ENCODE measurements at regions of chr11 and their contacts with region 1.

Region 1: DNA sequence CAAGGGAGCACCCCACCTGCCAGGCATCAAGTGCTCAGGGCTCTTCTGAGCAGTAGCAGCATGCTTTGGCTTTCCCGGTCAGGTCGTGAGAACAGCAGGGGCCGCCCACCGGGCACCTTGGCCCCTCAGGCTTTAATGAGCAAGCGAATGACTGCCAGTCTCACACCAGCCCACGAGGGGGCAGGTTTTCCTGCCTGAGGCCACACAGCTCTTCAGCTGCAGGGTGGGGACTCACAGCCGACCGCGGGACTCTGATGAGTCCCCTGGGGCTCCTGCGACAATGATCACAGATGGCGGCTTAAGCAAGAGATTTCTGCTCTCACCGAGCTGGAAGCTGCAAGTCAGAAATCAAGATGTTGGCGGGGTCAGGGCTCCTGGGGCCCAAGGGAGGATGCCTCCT is 14.3 kb upstream of the FGF19 start:
- DNase-seq: peak; percentile 77 to 84
- H3K4me3 ChIP-seq: peak overlapping the region in 1 of 4 experiments; percentile 14; a peak in 1 of 8 replicates
- H3K27ac ChIP-seq: no peak overlapping the region
- H3K4me1 ChIP-seq: peaks cover 0 to 10% (median 2%) of the 10 kb centered on the region in 4 experiments; a peak in 5 of 7 replicates
- H3K27me3 ChIP-seq: peaks cover 0 to 19% (median 13%) of the 10 kb centered on the region in 4 experiments; a peak in 5 of 7 replicates
- CTCF ChIP-seq: peak; percentile 87 to 92 (median 91)
- EP300 ChIP-seq: no peak
- POLR2A ChIP-seq: no peak
- RAD21 ChIP-seq: peak; percentile 85 to 92

Region 2: GRCh38 chr11:69511358-69512055 is 206.6 kb before region 1 on chr11:
- CTCF ChIA-PET with region 1: no interaction called
- POLR2A ChIA-PET with region 1: no interaction called
- DNase-seq: no peak
- H3K4me3 ChIP-seq: no peak overlapping the region
- H3K27ac ChIP-seq: no peak overlapping the region
- H3K4me1 ChIP-seq: peaks cover 0 to 4% (median 0%) of the 10 kb centered on the region in 4 experiments; a peak in 2 of 7 replicates
- H3K27me3 ChIP-seq: no peaks in the 10 kb centered on the region; a peak in 1 of 7 replicates
- CTCF ChIP-seq: no peak
- EP300 ChIP-seq: no peak
- POLR2A ChIP-seq: no peak
- RAD21 ChIP-seq: no peak

Region 3: DNA sequence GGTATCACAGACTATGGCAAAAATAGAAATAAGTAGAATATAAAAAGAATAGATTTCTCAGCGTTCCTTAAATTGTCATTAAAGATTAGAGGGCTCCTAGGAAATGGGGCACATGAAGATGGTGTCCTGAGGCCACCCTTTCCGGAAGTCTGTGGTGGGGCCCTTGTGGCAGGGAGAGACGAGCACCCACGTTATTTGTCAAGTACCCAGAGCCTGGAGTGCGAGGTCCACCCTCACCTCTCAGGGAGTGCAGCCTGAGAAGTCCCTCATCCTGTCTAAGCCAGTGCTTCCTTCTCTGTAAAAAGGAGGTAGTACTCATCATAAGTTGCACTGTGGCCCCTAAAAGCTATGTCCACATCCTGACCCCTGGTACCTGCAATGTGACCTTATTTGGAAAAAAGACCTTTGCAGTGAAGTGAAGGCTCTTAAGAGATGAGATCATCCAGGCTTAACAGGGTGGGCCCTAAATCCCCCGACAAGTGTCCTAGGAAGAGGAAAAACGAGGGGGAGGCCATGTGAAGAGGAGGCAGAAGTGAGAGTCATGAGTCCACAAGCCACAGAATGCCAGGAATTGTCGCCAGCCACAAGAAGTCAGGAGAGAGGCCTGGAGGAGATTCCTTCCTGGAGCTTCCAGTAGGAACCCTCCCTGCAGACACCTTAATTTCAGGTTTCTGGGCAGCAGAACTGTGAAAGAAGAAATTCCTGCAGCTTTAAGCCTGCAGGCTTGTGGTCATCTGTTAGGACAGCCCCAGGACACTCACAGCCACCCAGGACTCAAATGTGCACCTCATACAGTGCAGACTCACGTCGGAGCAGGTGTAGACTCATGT is 154.0 kb before region 1 on chr11:
- CTCF ChIA-PET with region 1: no interaction called
- POLR2A ChIA-PET with region 1: no interaction called
- DNase-seq: no peak
- H3K4me3 ChIP-seq: no peak overlapping the region
- H3K27ac ChIP-seq: no peak overlapping the region
- H3K4me1 ChIP-seq: 0 out of 7 replicates have a peak, but pooled peaks cover 0 to 1% (median 0%) of the 10 kb centered on the region in 4 experiments
- H3K27me3 ChIP-seq: no peaks in the 10 kb centered on the region
- CTCF ChIP-seq: no peak
- EP300 ChIP-seq: no peak
- POLR2A ChIP-seq: no peak
- RAD21 ChIP-seq: no peak

Region 4: DNA sequence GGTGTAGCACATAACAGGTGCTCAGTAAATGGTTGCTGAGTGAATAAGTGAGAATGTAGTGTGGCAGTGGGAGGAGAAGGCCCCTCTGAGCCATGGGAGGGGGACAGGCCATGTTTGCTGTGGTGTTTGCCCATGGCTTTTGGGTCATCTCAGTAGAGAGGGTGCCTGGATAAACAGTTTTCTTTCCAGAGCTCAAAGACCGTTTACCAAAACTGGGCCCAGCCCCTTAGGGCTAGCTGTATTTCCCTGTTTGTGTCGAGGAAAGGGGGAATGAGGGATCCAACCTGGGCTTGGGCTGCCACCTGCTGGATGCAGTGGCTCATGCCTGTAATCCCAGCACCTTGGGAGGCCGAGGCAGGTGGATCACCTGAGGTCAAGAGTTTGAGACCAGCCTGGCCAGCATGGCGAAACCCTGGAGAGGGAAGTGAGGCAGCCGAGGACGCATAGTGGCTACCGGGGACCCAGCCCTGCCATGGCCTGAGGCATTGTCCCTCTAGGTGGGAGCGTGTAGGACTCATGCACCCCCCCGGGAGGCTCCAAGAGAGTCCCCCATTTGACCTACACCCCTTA is 34.3 kb before region 1 on chr11:
- CTCF ChIA-PET with region 1: interaction called, 29 read pairs
- POLR2A ChIA-PET with region 1: no interaction called
- DNase-seq: peak in 1 of 2 experiments; percentile 80
- H3K4me3 ChIP-seq: no peak overlapping the region
- H3K27ac ChIP-seq: no peak overlapping the region
- H3K4me1 ChIP-seq: no peaks in the 10 kb centered on the region; a peak in 1 of 7 replicates
- H3K27me3 ChIP-seq: peaks cover 0 to 6% (median 3%) of the 10 kb centered on the region in 4 experiments; a peak in 4 of 7 replicates
- CTCF ChIP-seq: peak; percentile 65 to 74 (median 67)
- EP300 ChIP-seq: no peak
- POLR2A ChIP-seq: no peak
- RAD21 ChIP-seq: peak; percentile 70 to 79

Region 5: DNA sequence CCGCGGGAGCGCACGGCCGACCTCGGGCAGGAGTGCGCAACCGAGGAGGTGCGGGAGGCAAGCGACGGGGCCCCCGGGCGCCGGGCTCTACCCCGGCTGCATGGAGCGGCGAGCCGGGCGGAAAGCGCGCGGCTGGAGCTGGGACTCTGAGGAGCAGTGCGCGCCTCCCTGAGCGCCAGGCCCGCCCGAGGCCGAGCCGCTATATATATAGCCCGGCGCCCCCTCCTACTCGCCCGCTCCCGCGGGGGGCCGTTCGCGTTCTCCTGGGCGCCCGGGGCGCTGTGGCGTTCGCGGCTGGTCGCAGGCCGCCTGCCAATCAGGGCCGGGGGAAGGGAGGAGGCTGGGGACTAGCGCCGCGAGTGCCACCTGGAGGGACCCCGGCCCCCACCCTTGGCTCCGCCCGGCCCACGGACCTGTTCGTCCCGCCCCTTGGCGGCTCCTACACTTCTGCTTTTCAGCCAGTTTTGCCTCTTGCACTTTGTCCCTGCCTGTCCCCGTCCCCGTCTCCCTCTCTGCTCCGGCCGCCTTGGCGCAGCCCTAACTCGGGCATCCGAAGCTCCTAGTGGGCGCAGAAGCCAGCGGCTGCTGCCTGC is 57.1 kb after region 1 on chr11 and contains the start of gene FGF4:
- CTCF ChIA-PET with region 1: interaction called, 12 read pairs
- POLR2A ChIA-PET with region 1: no interaction called
- DNase-seq: peak; percentile 21 to 83
- H3K4me3 ChIP-seq: peak within 1 kb of the TSS; percentile 23 to 60 (median 36)
- H3K27ac ChIP-seq: no peak within 1 kb of the TSS
- H3K4me1 ChIP-seq: peaks cover 11 to 36% (median 28%) of the 10 kb centered on the region in 4 experiments
- H3K27me3 ChIP-seq: peaks cover 20 to 50% (median 46%) of the 10 kb centered on the region in 4 experiments
- CTCF ChIP-seq: no peak
- EP300 ChIP-seq: no peak
- POLR2A ChIP-seq: no peak
- RAD21 ChIP-seq: no peak
- total RNA-seq, gene FGF4: 2.0 TPM in 2 replicates

Region 6: DNA sequence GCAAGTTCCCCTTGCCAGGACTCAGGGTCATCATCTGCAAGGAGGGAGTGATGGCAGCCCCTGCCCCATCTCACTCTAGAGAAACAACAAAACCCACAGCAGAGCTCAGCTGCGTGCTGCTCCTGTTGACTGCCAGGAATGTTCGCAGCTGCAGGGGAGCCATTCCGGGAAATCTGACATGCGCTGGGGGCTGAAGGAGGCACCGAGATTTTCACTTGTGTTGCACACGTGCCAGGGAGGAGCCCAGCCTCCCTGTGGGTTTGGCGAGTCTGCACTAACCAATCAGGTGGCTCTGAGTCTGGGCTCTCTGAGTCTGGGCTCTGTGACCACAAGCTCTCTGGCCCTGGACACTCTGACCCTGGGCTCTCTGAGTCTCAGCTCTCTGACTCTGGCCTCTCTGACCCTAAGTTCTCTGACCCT is 90.5 kb after region 1 on chr11:
- CTCF ChIA-PET with region 1: interaction called, 15 read pairs
- POLR2A ChIA-PET with region 1: no interaction called
- DNase-seq: no peak
- H3K4me3 ChIP-seq: no peak overlapping the region
- H3K27ac ChIP-seq: no peak overlapping the region
- H3K4me1 ChIP-seq: peaks cover 0 to 6% (median 1%) of the 10 kb centered on the region in 4 experiments; a peak in 4 of 7 replicates
- H3K27me3 ChIP-seq: peaks cover 0 to 4% (median 1%) of the 10 kb centered on the region in 4 experiments; a peak in 3 of 7 replicates
- CTCF ChIP-seq: no peak
- EP300 ChIP-seq: no peak
- POLR2A ChIP-seq: no peak
- RAD21 ChIP-seq: no peak

Region 7: DNA sequence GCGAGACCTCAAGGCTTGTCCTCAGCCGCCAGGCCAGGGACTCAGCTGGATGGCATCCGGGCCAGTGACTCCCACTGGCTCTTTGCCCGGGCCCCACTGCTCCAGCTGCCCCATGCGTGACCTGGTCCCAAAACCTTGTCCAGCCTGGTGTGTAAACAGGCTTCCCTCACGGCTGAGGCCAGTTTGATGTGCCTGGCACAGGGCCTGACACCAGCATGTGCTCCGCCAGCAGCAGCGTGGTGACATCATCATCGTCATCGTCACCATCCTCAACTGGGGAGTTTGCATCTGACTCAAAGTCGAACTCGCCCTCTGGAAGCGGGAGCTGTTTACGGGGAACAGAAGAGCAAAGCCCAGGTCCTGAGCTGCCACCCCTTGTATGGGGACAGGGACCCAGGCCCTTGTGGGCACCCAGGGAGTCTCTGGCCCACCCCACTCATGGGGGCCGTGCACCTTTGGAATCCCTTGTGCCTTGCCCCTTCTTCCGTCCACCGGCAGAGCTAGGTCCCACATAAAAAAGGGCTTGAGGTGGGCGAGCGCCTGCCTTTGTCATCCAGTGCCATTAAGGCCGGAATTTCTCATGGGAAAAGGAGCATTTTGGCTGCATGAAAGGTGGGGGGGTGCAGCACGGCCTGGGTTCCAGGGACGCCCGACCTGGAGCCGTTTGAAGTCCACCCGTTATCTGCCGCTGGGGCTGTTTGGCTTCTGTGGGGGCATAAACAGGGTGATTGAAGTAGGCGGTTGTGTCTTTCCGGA is 149.8 kb after region 1 on chr11:
- CTCF ChIA-PET with region 1: interaction called, 10 read pairs
- POLR2A ChIA-PET with region 1: no interaction called
- DNase-seq: no peak
- H3K4me3 ChIP-seq: no peak overlapping the region
- H3K27ac ChIP-seq: no peak overlapping the region
- H3K4me1 ChIP-seq: peaks cover 0 to 18% (median 9%) of the 10 kb centered on the region in 4 experiments; a peak in 5 of 7 replicates
- H3K27me3 ChIP-seq: peaks cover 0 to 3% (median 1%) of the 10 kb centered on the region in 4 experiments; a peak in 2 of 7 replicates
- CTCF ChIP-seq: no peak
- EP300 ChIP-seq: no peak
- POLR2A ChIP-seq: no peak
- RAD21 ChIP-seq: no peak

Measured in H1 (cell line).